Heart left ventricle (tissue), 16 donors: ENCODE measurements at regions of chr19 and their contacts with region 1.

Region 1: GRCh38 chr19:38335949-38336637 is 463 bp downstream of the CATSPERG start:
- DNase-seq: peak; percentile 94 to 98 (median 97)
- ATAC-seq: peak; percentile 91 to 94 (median 92)
- H3K4me3 ChIP-seq: peak overlapping the region; percentile 35 to 94 (median 74)
- H3K27ac ChIP-seq: peak overlapping the region; percentile 85 to 98 (median 93)
- H3K4me1 ChIP-seq: peaks cover 0 to 12% (median 8%) of the 10 kb centered on the region in 12 donors
- H3K27me3 ChIP-seq: no peaks in the 10 kb centered on the region
- CTCF ChIP-seq: no peak
- POLR2A ChIP-seq: peak in 1 of 2 donors; percentile 36

Region 2: DNA sequence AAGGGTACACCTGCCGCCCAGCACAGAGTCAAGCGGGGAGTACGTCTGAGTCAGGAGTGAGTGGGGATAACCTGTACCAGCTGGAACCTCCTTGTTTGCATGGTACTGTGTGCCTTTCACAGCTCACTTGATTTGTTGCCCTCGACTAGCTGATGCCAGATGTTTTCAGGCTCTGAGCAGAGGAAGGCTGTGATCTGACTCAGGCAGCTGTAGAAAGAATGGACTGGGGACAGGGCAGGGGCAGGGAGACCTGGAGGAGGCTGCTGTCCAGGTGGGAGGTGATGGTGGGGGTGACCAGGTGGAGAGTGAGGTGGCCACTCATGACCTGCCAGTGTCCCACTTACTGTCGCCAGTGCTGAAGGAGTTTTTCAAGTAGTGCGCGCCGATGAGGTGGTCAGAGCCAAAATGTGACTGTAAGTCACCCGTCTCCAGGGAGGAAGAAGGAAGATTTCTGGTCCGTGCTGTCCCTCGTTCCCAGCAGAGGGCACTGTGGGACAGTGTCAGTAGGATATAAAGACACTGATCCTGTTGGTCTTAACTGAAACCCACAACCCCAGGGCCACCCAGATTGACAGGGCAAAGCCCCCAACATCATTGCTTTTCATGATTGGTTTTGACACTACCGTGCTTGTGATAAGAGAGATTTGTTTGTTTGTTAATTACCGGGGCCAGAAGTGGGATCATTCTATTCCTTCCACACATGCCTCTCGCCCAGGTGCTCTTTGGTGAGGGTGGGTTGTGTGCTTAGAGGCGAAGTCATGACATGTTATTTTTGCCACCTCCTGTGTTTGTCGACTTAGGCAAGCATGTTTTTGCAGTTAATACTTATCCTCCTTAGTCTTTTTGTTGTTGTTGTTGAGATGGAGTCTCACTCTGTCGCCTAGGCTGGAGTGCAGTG is 240.4 kb before region 1 on chr19:
- intact Hi-C with region 1: loop called in 1 of 10 experiments (anchors 5 kb)
- DNase-seq: peak; percentile 52 to 75 (median 66)
- ATAC-seq: peak in 3 of 4 donors; percentile 45 to 77 (median 58)
- H3K4me3 ChIP-seq: no peak overlapping the region
- H3K27ac ChIP-seq: no peak overlapping the region
- H3K4me1 ChIP-seq: peaks cover 0 to 21% (median 0%) of the 10 kb centered on the region in 12 donors
- H3K27me3 ChIP-seq: no peaks in the 10 kb centered on the region
- CTCF ChIP-seq: peak; percentile 59 to 79 (median 72)
- POLR2A ChIP-seq: no peak

Region 3: DNA sequence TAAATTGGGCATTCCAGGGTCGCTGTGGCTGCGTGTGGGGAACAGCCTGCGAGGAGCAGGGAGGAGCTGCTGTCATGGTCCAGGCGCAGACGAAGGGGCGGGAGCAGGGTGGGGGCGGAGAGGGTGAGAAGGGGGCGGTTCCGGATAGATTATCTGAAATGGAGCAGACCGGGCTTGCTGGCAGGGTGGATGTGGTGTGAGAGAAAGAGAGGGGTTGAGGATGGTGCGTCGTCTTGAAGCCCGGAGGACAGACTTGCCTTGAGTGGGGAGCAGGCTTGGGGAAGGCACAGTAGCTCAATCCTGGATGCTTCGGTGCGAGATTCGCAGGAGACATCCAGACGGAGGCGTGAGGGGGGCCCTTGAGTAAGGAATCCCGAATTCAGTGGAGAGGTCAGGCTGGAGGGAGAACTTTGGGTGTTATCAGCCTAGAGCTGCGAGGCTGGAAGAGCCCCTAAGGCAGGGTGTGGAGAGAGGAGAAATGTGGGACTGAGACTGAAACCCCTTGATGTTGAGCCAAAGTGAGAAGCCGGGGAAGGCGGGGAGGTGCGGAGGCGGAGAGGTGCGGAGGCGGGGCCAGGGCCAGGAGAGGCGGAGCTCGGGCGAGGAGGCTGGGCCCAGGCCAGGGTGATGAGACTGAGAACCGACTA is 152.7 kb before region 1 on chr19:
- intact Hi-C with region 1: no loop called
- DNase-seq: peak; percentile 40 to 79 (median 57)
- ATAC-seq: peak; percentile 57 to 78 (median 72)
- H3K4me3 ChIP-seq: peak overlapping the region in 10 of 12 donors; percentile 25 to 49 (median 32)
- H3K27ac ChIP-seq: peak overlapping the region in 10 of 12 donors; percentile 16 to 67 (median 56)
- H3K4me1 ChIP-seq: no peaks in the 10 kb centered on the region
- H3K27me3 ChIP-seq: no peaks in the 10 kb centered on the region
- CTCF ChIP-seq: no peak
- POLR2A ChIP-seq: no peak

Region 4: GRCh38 chr19:38229585-38230073 is 106.5 kb before region 1 on chr19:
- intact Hi-C with region 1: loop called in 1 of 10 experiments (anchors 2 kb)
- DNase-seq: peak; percentile 66 to 84 (median 80)
- ATAC-seq: peak; percentile 78 to 96 (median 92)
- H3K4me3 ChIP-seq: peak overlapping the region in 9 of 12 donors; percentile 17 to 44 (median 29)
- H3K27ac ChIP-seq: no peak overlapping the region
- H3K4me1 ChIP-seq: peaks cover 7 to 14% (median 11%) of the 10 kb centered on the region in 12 donors
- H3K27me3 ChIP-seq: peaks cover 15 to 64% (median 32%) of the 10 kb centered on the region in 9 donors
- CTCF ChIP-seq: peak in 2 of 12 donors; percentile 13 to 15
- POLR2A ChIP-seq: no peak

Region 5: DNA sequence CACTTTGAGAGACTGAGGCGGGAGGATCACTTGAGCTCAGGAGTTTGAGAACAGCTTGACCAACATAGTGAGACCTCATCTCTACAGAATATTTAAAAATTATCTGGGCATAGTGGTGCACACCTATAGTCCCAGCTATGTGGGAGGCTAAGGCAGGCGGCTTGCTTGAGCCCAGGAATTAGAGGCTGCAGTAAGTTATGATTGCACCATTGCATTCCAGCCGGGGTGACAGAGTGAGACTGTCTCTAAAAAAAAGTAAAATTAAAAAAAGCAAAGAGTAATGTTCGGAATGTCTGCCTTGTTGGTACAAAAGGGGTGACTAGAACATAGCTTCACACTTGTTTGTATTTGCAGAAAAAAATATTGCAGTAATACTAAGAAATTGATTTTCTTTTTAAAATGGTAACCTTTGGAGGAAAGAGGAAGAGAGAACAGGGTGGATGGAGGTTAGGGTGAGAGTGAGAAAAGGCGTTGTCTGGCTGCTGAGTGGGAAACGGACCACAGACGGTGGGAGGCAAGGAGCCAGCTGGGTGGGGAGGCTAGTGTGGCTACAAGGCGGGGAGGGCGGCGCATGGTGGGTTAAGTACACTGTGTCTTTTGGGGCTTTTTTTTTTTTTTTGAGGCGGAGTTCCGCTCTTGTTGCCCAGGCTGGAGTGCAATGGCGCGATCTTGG is 90.1 kb before region 1 on chr19:
- intact Hi-C with region 1: loop called in 9 of 10 experiments (anchors 1 to 5 kb)
- DNase-seq: peak in 1 of 5 donors; percentile 49
- ATAC-seq: peak in 1 of 4 donors; percentile 16
- H3K4me3 ChIP-seq: no peak overlapping the region
- H3K27ac ChIP-seq: peak overlapping the region in 6 of 12 donors; percentile 11 to 76 (median 40)
- H3K4me1 ChIP-seq: peaks cover 0 to 46% (median 16%) of the 10 kb centered on the region in 12 donors
- H3K27me3 ChIP-seq: no peaks in the 10 kb centered on the region
- CTCF ChIP-seq: no peak
- POLR2A ChIP-seq: no peak

Region 6: GRCh38 chr19:38361633-38362075 is 25.6 kb after region 1 on chr19:
- intact Hi-C with region 1: loop called in 2 of 10 experiments (anchors 1 to 2 kb)
- DNase-seq: peak; percentile 78 to 87 (median 82)
- ATAC-seq: peak; percentile 76 to 93 (median 91)
- H3K4me3 ChIP-seq: peak overlapping the region; percentile 37 to 97 (median 63)
- H3K27ac ChIP-seq: peak overlapping the region in 6 of 12 donors; percentile 2 to 70 (median 52)
- H3K4me1 ChIP-seq: peaks cover 0 to 20% (median 9%) of the 10 kb centered on the region in 12 donors
- H3K27me3 ChIP-seq: peaks cover 0 to 24% (median 0%) of the 10 kb centered on the region in 9 donors
- CTCF ChIP-seq: no peak
- POLR2A ChIP-seq: no peak

Region 7: GRCh38 chr19:38618590-38619360 is 282.7 kb after region 1 on chr19 and contains the start of gene EIF3K:
- intact Hi-C with region 1: no loop called
- DNase-seq: peak; percentile 98 to 100 (median 99)
- ATAC-seq: peak; percentile 93 to 97 (median 95)
- H3K4me3 ChIP-seq: peak within 1 kb of the TSS; percentile 54 to 98 (median 84)
- H3K27ac ChIP-seq: peak within 1 kb of the TSS; percentile 81 to 96 (median 90)
- H3K4me1 ChIP-seq: peaks cover 2 to 28% (median 20%) of the 10 kb centered on the region in 12 donors
- H3K27me3 ChIP-seq: no peaks in the 10 kb centered on the region
- CTCF ChIP-seq: no peak
- POLR2A ChIP-seq: peak; percentile 51 to 80
- total RNA-seq, gene EIF3K: 447 to 1,239 (median 596) TPM